Mammary epithelial cell (primary cell): ENCODE measurements at regions of chr2 and their contacts with region 1.

Region 1: GRCh38 chr2:8558096-8558495 is 123.8 kb upstream of the ID2 start:
- DNase-seq: no peak
- H3K4me3 ChIP-seq: no peak overlapping the region
- H3K27ac ChIP-seq: no peak overlapping the region
- H3K4me1 ChIP-seq: no peaks in the 10 kb centered on the region
- H3K27me3 ChIP-seq: no peaks in the 10 kb centered on the region
- CTCF ChIP-seq: no peak

Region 2: GRCh38 chr2:7962161-7962560 is 595.9 kb before region 1 on chr2:
- CTCF ChIA-PET with region 1: no interaction called
- dilution Hi-C with region 1: loop called (anchors 5 kb)
- in situ Hi-C with region 1: no loop called
- intact Hi-C with region 1: no loop called
- DNase-seq: no peak
- H3K4me3 ChIP-seq: no peak overlapping the region
- H3K27ac ChIP-seq: no peak overlapping the region
- H3K4me1 ChIP-seq: no peaks in the 10 kb centered on the region
- H3K27me3 ChIP-seq: no peaks in the 10 kb centered on the region
- CTCF ChIP-seq: no peak